ENCODE measurements at regions of chr5 and their contacts with region 1.

Region 1: DNA sequence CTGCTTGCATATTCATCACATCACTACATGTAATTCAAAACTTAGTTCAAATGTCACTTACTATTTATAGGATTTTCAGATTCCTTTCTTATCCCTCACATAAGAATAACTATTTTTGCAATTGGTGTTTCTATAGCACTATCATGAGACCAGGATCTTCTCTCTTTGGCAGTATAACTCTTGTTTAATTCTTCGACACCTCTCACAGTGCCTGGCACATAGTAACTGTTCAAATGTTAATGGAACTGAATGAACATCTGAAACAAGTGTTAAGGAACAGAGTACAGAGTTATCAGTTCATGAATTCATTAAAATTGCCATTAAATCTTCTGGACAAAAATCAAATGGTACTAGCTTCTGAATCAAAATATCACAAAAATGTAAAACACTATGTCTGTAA is 40.0 kb downstream of the FBXL17 start:
- DNase-seq: no peak
- H3K4me3 ChIP-seq: no peak overlapping the region
- H3K27ac ChIP-seq: peak overlapping the region; percentile 64
- H3K4me1 ChIP-seq: peaks cover 50% of the 10 kb centered on the region
- H3K27me3 ChIP-seq: no peaks in the 10 kb centered on the region
- CTCF ChIP-seq: no peak

Region 2: DNA sequence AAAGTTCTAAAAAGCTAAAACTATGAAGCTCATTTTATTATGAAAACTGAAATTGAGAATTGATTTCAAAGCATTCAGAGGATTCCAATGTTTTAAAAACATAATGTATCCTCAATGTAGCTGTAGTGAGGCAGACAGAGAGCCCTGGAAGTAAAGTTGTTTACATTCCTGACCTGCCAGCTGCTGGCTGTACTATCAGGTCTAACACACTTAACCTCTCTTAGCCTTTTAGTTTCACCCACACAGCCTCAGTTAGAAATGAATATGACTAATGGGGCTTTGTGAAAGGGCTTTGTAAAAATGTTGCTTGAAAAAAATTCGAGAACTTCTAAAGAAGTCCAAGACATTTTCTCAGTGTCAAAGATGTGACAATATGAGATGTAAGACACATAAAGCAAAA is 82.6 kb before region 1 on chr5:
- intact Hi-C with region 1: loop called (anchors 5 kb)
- DNase-seq: no peak
- H3K4me3 ChIP-seq: no peak overlapping the region
- H3K27ac ChIP-seq: no peak overlapping the region
- H3K4me1 ChIP-seq: peaks cover 41% of the 10 kb centered on the region
- H3K27me3 ChIP-seq: no peaks in the 10 kb centered on the region
- CTCF ChIP-seq: no peak

Measured in left ventricle myocardium inferior (tissue), 1 donor.